ENCODE measurements at regions of chr18 and their contacts with region 1.

Region 1: GRCh38 chr18:13726232-13726971 is at the starts of genes FAM210A and RNMT:
- DNase-seq: peak; percentile 95
- H3K4me3 ChIP-seq: peak within 1 kb of the TSS; percentile 91 to 98 (median 92)
- H3K27ac ChIP-seq: peak within 1 kb of the TSS; percentile 97
- H3K4me1 ChIP-seq: peaks cover 11% of the 10 kb centered on the region
- H3K27me3 ChIP-seq: no peaks in the 10 kb centered on the region
- CTCF ChIP-seq: peak in 1 of 2 donors; percentile 18
- total RNA-seq, gene FAM210A: 37.8 to 40.2 TPM
- total RNA-seq, gene RNMT: 32.8 to 37.6 TPM

Region 2: DNA sequence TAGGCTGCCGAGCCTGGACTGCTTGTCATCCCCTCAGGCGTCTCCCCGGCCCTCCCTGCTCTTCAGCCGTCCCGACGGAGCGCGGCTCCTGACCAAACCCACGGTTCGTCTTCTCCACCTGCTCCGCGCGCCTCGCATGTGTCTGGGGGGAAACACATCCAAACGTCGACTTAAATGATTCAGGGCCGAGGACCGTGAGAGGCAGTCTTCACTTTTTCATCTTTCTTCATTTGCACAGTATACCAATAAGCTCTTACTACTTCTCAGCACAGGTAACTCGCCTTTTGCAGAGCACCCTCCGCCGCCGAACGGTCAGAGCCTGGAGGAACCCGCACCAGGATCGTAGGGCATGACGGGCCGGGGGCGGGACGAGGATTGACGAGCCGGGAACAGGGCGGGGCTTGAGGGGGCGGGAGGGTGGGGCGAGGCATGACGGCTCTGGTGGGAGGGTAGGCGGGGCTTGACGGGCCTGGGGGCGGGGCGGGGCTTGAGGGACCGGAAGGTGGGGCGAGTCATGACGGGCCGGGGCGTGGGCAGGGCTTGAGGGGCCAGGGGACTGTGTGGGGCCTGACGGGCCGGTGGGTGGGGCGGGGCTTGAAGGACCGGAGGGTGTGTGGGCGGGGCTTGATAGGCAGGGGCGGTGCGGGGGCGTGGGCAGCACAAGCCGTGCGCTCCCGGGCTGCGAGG is 778.9 kb before region 1 on chr18 and contains the start of gene SEH1L:
- CTCF ChIA-PET with region 1: no interaction called
- dilution Hi-C with region 1: no loop called
- in situ Hi-C with region 1: no loop called
- intact Hi-C with region 1: loop called (anchors 5 kb)
- DNase-seq: peak; percentile 94
- H3K4me3 ChIP-seq: peak within 1 kb of the TSS; percentile 90 to 99 (median 93)
- H3K27ac ChIP-seq: peak within 1 kb of the TSS; percentile 96
- H3K4me1 ChIP-seq: peaks cover 7% of the 10 kb centered on the region
- H3K27me3 ChIP-seq: no peaks in the 10 kb centered on the region
- CTCF ChIP-seq: no peak
- total RNA-seq, gene SEH1L: 41.0 to 67.8 TPM

Region 3: DNA sequence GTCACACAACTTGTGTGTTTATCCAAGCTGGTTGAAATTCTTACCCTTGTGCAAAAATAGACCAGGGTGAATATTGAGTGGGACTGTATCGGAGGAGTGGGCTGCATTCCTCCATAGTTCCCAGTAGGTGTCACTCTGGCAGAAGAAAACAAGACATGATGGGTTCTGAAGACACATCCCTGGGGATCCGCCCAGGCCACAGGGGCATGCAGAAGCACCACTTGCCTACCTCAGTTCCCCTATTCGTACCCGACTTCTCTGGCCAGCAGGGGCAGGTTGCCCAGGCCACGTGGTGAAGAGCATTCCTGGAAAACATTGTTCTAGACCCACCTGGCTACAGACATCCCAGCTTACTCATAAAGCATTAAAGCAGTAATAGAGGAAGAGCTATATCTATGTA is 168.3 kb before region 1 on chr18:
- CTCF ChIA-PET with region 1: no interaction called
- dilution Hi-C with region 1: loop called (anchors 10 kb)
- in situ Hi-C with region 1: no loop called
- intact Hi-C with region 1: loop called (anchors 2 kb)
- DNase-seq: peak; percentile 29
- H3K4me3 ChIP-seq: no peak overlapping the region
- H3K27ac ChIP-seq: no peak overlapping the region
- H3K4me1 ChIP-seq: no peaks in the 10 kb centered on the region
- H3K27me3 ChIP-seq: no peaks in the 10 kb centered on the region
- CTCF ChIP-seq: peak; percentile 67 to 70

Region 4: DNA sequence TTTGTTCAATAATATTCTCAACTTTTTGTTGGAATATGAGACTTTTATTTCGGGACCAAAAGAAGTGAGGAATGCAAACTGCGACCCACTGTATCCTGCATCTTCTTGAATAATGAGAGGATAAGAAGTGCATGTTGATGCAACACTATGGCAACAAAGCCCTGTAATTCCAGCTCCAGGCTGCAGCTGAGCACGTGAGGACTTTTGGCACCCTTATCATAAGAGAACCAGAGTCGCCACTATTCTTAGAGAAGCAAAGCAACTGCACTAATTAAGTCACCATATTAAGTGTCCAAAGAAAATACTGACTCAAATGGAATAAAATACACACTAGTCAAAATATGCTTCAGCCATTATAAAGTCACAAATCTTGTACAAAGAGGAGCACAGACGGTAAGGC is 65.9 kb before region 1 on chr18:
- CTCF ChIA-PET with region 1: no interaction called
- dilution Hi-C with region 1: no loop called
- in situ Hi-C with region 1: no loop called
- intact Hi-C with region 1: loop called (anchors 5 kb)
- DNase-seq: no peak
- H3K4me3 ChIP-seq: no peak overlapping the region
- H3K27ac ChIP-seq: no peak overlapping the region
- H3K4me1 ChIP-seq: no peaks in the 10 kb centered on the region
- H3K27me3 ChIP-seq: no peaks in the 10 kb centered on the region
- CTCF ChIP-seq: no peak

Region 5: GRCh38 chr18:13672657-13673056 is 53.7 kb before region 1 on chr18:
- CTCF ChIA-PET with region 1: no interaction called
- dilution Hi-C with region 1: no loop called
- in situ Hi-C with region 1: no loop called
- intact Hi-C with region 1: loop called (anchors 2 kb)
- DNase-seq: no peak
- H3K4me3 ChIP-seq: no peak overlapping the region
- H3K27ac ChIP-seq: no peak overlapping the region
- H3K4me1 ChIP-seq: no peaks in the 10 kb centered on the region
- H3K27me3 ChIP-seq: no peaks in the 10 kb centered on the region
- CTCF ChIP-seq: no peak

Region 6: GRCh38 chr18:13710460-13710859 is 15.9 kb before region 1 on chr18:
- CTCF ChIA-PET with region 1: no interaction called
- dilution Hi-C with region 1: no loop called
- in situ Hi-C with region 1: no loop called
- intact Hi-C with region 1: loop called (anchors 1 kb)
- DNase-seq: peak; percentile 99
- H3K4me3 ChIP-seq: no peak overlapping the region
- H3K27ac ChIP-seq: peak overlapping the region; percentile 98
- H3K4me1 ChIP-seq: peaks cover 20% of the 10 kb centered on the region
- H3K27me3 ChIP-seq: no peaks in the 10 kb centered on the region
- CTCF ChIP-seq: no peak